ENCODE measurements at regions of chr5 and their contacts with region 1.

Region 1: DNA sequence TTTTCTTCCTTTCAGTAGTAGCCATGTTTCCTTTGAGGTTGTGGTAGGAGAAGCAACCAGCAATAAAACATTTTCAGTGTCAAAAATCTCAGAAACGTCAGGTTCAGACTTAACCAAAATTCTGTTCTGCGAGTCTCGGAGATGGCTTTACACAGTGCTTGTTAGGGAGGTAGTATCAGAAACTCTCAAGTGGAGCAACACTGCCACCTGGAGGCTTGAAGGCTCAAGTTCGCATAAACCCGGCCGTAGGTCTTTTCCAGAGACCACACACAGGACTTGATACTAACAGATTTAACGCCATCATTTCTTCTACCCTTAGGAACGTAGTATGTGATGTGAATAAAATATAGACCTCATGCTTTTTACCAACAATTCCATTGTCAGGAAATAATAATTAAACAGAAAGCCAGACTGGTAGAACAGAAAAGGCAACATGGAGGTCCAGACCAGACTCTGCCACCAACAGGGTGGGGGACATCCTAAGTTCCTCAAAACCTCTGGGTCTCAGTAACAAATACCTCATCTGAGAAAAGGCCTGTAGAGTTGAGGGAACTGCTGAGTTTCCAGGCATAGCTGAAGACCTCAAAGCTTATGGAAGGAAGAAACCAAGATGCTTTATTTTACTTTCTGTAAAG is 8.5 kb downstream of the PTGER4 start:
- DNase-seq: peak; percentile 62
- ATAC-seq: peak; percentile 93
- H3K4me3 ChIP-seq: no peak overlapping the region
- H3K27ac ChIP-seq: no peak overlapping the region
- H3K4me1 ChIP-seq: no peaks in the 10 kb centered on the region
- H3K27me3 ChIP-seq: no peaks in the 10 kb centered on the region
- CTCF ChIP-seq: peak; percentile 74 to 86 (median 81)
- EP300 ChIP-seq: no peak
- POLR2A ChIP-seq: no peak
- RAD21 ChIP-seq: peak; percentile 99

Region 2: DNA sequence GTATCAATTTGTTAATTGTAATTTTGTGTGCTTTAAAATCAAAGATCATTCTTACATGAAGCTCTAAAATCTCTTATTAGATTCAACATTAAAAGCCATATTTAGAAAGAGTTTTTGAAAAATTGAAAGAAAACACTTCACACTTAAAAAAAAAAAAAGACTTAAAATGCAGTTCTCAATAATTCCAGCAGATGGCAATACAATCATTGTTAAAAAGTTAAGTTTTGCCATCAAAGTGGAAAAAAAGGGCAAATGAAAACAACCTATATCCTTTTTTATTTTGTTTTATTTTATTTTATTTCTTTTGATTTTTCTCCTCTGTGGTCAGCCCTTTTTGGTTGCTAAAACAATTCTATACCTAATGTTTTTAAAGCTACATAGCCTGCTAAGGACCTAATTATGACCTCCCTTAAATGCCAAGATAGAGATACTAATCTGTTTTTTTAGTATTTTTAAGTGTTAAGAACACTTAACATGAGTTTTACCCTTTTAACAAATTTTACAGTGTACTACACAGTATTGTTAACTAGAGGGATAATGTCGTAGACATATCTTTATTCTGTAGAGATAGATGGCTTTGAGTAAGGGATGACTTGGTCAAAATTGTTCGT is 1109.3 kb before region 1 on chr5:
- CTCF ChIA-PET with region 1: interaction called, 13 read pairs
- POLR2A ChIA-PET with region 1: no interaction called
- RAD21 ChIA-PET with region 1: interaction called, 4 read pairs
- SMC1A ChIA-PET with region 1: no interaction called
- in situ Hi-C with region 1: loop called (anchors 25 kb)
- intact Hi-C with region 1: loop called (anchors 5 kb)
- DNase-seq: no peak
- ATAC-seq: no peak
- H3K4me3 ChIP-seq: no peak overlapping the region
- H3K27ac ChIP-seq: no peak overlapping the region
- H3K4me1 ChIP-seq: no peaks in the 10 kb centered on the region
- H3K27me3 ChIP-seq: 0 out of 4 replicates have a peak, but pooled peaks cover 0 to 2% of the 10 kb centered on the region in 2 experiments
- CTCF ChIP-seq: peak; percentile 33 to 43 (median 43); a peak in 4 of 6 replicates
- EP300 ChIP-seq: no peak
- POLR2A ChIP-seq: no peak
- RAD21 ChIP-seq: peak; percentile 48

Region 3: GRCh38 chr5:39714036-39714698 is 974.1 kb before region 1 on chr5:
- CTCF ChIA-PET with region 1: interaction called, 23 read pairs
- POLR2A ChIA-PET with region 1: no interaction called
- RAD21 ChIA-PET with region 1: interaction called, 8 read pairs
- SMC1A ChIA-PET with region 1: interaction called, 9 read pairs
- in situ Hi-C with region 1: loop called (anchors 10 kb)
- intact Hi-C with region 1: loop called (anchors 1 kb)
- DNase-seq: peak; percentile 3
- ATAC-seq: peak; percentile 63
- H3K4me3 ChIP-seq: no peak overlapping the region
- H3K27ac ChIP-seq: no peak overlapping the region
- H3K4me1 ChIP-seq: no peaks in the 10 kb centered on the region
- H3K27me3 ChIP-seq: no peaks in the 10 kb centered on the region
- CTCF ChIP-seq: peak; percentile 49 to 53 (median 52)
- EP300 ChIP-seq: no peak
- POLR2A ChIP-seq: no peak
- RAD21 ChIP-seq: peak; percentile 87

Region 4: DNA sequence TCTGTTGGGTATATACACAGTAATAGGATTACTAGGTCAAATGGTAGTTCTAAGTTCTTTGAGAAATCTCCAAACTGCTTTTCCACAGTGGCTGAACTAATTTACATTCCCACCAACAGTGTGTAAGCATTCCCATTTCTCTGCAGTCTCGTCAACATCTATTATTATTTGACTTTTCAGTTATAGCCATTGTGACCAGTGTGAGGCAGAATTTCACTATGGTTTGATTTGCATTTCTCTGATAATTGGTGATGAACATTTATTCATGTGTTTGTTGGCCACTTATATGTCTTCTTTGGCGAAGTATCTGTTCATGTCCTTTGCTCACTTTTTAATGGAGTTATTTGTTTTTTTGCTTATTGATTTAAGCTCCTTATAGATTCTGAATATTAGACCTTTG is 667.2 kb before region 1 on chr5:
- CTCF ChIA-PET with region 1: interaction called, 3 read pairs
- POLR2A ChIA-PET with region 1: no interaction called
- RAD21 ChIA-PET with region 1: no interaction called
- SMC1A ChIA-PET with region 1: interaction called, 4 read pairs
- in situ Hi-C with region 1: no loop called
- intact Hi-C with region 1: loop called (anchors 10 kb)
- DNase-seq: no peak
- ATAC-seq: no peak
- H3K4me3 ChIP-seq: no peak overlapping the region
- H3K27ac ChIP-seq: no peak overlapping the region
- H3K4me1 ChIP-seq: no peaks in the 10 kb centered on the region
- H3K27me3 ChIP-seq: no peaks in the 10 kb centered on the region
- CTCF ChIP-seq: no peak
- EP300 ChIP-seq: no peak
- POLR2A ChIP-seq: no peak
- RAD21 ChIP-seq: no peak

Region 5: GRCh38 chr5:40223884-40224402 is 464.3 kb before region 1 on chr5:
- CTCF ChIA-PET with region 1: no interaction called
- POLR2A ChIA-PET with region 1: no interaction called
- RAD21 ChIA-PET with region 1: interaction called, 4 read pairs
- SMC1A ChIA-PET with region 1: interaction called, 3 read pairs
- in situ Hi-C with region 1: no loop called
- intact Hi-C with region 1: loop called (anchors 2 kb)
- DNase-seq: peak; percentile 85
- ATAC-seq: peak; percentile 88
- H3K4me3 ChIP-seq: no peak overlapping the region
- H3K27ac ChIP-seq: no peak overlapping the region
- H3K4me1 ChIP-seq: peaks cover 5% of the 10 kb centered on the region; the same call in 1 of the 2 replicates
- H3K27me3 ChIP-seq: no peaks in the 10 kb centered on the region
- CTCF ChIP-seq: no peak
- EP300 ChIP-seq: no peak
- POLR2A ChIP-seq: no peak
- RAD21 ChIP-seq: no peak

Region 6: DNA sequence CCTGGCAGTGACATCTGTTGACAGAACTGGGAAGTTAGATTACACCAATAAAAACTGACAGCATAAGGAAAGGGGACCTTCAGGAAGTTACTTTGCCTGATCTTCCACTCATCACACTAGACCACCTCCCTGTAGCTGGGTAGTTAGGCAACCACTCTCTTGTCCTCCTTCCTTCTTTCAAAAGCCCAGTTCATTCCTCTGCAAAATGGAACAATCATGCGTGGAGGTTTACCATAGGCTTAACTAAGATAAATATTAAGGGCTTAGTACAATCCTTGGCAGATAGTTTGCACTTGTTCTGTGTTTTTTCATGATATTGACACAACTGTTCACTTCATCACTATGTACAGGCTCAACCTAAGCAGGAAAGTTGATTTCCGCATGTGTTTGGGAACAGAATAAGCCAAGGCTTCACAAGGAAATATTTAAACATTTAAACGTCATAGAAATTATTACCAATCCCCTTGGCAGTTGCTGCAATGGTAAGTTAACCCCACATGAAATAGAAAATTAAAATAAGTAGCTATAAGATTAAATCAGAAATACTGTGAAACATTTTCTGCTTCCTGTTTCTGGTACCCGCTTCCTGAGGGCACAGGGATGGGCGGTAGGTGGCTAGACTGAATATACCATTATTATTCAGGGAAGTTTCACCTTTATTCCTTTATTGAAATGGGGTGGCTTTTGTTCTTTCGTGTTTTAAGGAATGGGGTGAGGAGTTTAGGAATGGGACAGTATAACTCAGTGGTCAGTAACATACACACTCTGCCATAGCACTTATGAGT is 18.4 kb before region 1 on chr5:
- CTCF ChIA-PET with region 1: interaction called, 8 read pairs
- POLR2A ChIA-PET with region 1: no interaction called
- RAD21 ChIA-PET with region 1: interaction called, 4 read pairs
- SMC1A ChIA-PET with region 1: interaction called, 11 read pairs
- in situ Hi-C with region 1: no loop called
- intact Hi-C with region 1: no loop called
- DNase-seq: no peak
- ATAC-seq: no peak
- H3K4me3 ChIP-seq: no peak overlapping the region
- H3K27ac ChIP-seq: no peak overlapping the region
- H3K4me1 ChIP-seq: no peaks in the 10 kb centered on the region
- H3K27me3 ChIP-seq: no peaks in the 10 kb centered on the region; a peak in 1 of 4 replicates
- CTCF ChIP-seq: no peak
- EP300 ChIP-seq: no peak
- POLR2A ChIP-seq: no peak
- RAD21 ChIP-seq: no peak

Region 7: GRCh38 chr5:40736103-40736875 is 48.0 kb after region 1 on chr5:
- CTCF ChIA-PET with region 1: interaction called, 10 read pairs
- POLR2A ChIA-PET with region 1: no interaction called
- RAD21 ChIA-PET with region 1: interaction called, 3 read pairs
- SMC1A ChIA-PET with region 1: interaction called, 9 read pairs
- in situ Hi-C with region 1: no loop called
- intact Hi-C with region 1: loop called (anchors 2 kb)
- DNase-seq: peak; percentile 37
- ATAC-seq: peak; percentile 89
- H3K4me3 ChIP-seq: no peak overlapping the region
- H3K27ac ChIP-seq: no peak overlapping the region
- H3K4me1 ChIP-seq: no peaks in the 10 kb centered on the region
- H3K27me3 ChIP-seq: no peaks in the 10 kb centered on the region
- CTCF ChIP-seq: peak; percentile 62 to 76 (median 63)
- EP300 ChIP-seq: no peak
- POLR2A ChIP-seq: no peak
- RAD21 ChIP-seq: peak; percentile 78

Measured in GM12878 (cell line).